HCT116 (cell line): ENCODE measurements at regions of chr15 and their contacts with region 1.

Region 1: DNA sequence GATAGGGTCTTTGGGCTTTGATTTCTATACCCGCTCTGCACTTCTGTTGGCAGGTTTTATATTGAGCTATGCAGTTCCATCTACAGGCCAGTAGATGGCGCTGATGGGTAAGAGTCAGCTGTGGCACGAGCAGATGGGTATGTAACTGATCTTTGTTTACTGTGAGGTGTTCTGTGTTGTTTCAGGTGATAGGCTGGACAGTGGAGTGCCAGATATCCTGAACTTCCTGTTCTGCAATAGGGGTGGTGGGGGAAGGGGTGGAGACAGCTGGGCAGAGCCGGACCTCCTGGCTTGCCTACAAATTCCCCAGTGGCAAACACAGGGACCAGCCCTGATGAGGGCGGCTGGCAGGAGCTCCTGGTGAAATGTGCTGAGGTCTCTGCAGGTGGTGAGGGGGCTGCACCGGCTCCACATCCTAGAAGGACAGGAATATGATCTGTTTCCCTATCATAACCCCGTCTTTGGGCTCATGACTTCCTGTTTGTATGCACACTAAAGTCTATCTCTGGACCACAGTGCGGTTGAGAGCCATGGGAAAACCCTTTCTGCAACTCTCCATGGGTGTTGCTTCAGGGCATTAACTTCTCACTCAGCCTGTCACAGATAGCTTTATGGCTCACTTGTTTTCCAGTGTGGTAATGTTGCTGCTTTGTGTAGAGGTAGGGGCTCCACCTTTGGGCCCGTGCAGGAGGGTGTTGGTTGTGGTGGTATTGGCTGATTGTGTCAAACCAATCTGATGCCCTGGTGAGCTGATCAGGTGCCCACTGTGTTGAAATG is 13.4 kb upstream of the FAM98B start:
- DNase-seq: peak; percentile 47
- ATAC-seq: peak; percentile 91
- H3K4me3 ChIP-seq: no peak overlapping the region
- H3K27ac ChIP-seq: no peak overlapping the region
- H3K4me1 ChIP-seq: peaks cover 0 to 5% of the 10 kb centered on the region in 2 experiments; a peak in 1 of 4 replicates
- H3K27me3 ChIP-seq: no peaks in the 10 kb centered on the region
- CTCF ChIP-seq: peak; percentile 48 to 97 (median 94); a peak in 5 of 6 replicates
- POLR2A ChIP-seq: no peak
- RAD21 ChIP-seq: peak; percentile 72

Region 2: DNA sequence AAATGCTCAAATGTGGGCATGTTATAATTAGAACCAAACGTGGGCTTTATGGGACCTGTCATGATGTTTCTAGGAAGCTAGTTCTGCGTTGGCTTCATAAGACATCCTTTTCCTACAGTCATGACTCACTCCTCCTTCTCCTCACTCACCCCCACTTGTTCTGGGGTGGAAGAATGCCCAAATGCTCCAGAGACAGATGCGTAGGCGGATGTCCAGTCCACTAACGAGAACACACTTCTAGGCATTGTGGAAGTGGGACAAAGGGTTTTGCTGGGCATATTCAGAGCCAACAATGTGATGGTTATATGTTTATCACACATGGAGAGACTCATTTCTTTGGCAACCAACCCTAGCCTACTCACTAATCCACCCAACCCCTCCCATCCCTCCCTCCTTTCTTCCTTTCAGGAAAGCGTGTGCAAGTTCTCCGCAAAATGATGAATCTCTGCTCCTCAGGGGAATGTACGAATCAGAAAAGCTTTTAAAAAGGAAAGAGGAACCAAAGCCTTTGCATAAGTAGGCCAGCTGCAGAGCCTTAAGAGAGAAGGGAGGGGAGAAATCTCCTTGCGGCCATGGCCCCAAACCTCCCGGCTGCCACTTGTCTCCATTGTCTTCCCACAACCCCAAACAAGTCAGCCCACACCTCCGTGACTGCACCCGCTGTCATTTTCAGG is 310.9 kb before region 1 on chr15:
- CTCF ChIA-PET with region 1: no interaction called
- POLR2A ChIA-PET with region 1: no interaction called
- RAD21 ChIA-PET with region 1: no interaction called
- intact Hi-C with region 1: no loop called
- DNase-seq: no peak
- ATAC-seq: no peak
- H3K4me3 ChIP-seq: no peak overlapping the region
- H3K27ac ChIP-seq: no peak overlapping the region
- H3K4me1 ChIP-seq: peaks cover 13 to 14% of the 10 kb centered on the region in 2 experiments
- H3K27me3 ChIP-seq: no peaks in the 10 kb centered on the region
- CTCF ChIP-seq: no peak
- POLR2A ChIP-seq: no peak
- RAD21 ChIP-seq: no peak

Region 3: DNA sequence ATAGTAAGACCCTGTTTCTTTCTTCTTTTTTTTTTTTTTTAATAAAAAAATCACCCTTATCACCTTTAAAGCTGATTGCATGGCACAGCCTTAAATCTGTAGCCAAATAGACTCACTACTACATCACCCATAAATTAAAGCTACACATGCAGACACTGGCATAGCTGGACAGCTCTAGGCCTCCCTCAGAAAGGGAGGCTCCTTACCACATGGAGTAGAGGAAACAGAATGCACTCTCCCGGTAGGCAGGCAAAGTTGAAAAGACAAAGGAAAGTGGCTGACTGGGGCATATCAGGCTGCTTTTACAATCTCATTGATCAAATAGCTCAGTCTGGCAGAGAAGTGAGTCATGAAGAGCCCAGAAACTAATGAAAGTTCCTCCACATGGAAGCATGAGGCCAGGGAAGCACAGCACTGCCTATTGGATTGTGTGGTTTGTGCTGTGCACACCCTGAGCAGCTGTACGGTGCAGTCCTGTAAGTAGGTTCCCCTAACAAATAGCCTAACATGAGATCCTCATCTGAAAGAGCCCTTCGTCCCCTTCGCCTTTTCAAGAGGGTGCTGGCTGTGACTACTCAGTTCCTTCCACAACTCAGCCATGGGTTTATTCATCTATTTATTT is 19.4 kb before region 1 on chr15:
- CTCF ChIA-PET with region 1: interaction called, 14 read pairs
- POLR2A ChIA-PET with region 1: no interaction called
- RAD21 ChIA-PET with region 1: no interaction called
- intact Hi-C with region 1: no loop called
- DNase-seq: no peak
- ATAC-seq: no peak
- H3K4me3 ChIP-seq: no peak overlapping the region
- H3K27ac ChIP-seq: no peak overlapping the region
- H3K4me1 ChIP-seq: no peaks in the 10 kb centered on the region
- H3K27me3 ChIP-seq: peaks cover 13% of the 10 kb centered on the region; the same call in 1 of the 2 replicates
- CTCF ChIP-seq: no peak
- POLR2A ChIP-seq: no peak
- RAD21 ChIP-seq: no peak

Region 4: GRCh38 chr15:38427380-38427779 is 13.2 kb before region 1 on chr15:
- CTCF ChIA-PET with region 1: interaction called, 10 read pairs
- POLR2A ChIA-PET with region 1: no interaction called
- RAD21 ChIA-PET with region 1: interaction called in 1 of 2 experiments, 3 read pairs
- intact Hi-C with region 1: no loop called
- DNase-seq: no peak
- ATAC-seq: 0 out of 2 replicates have a peak, but pooled peaks have one; percentile 57
- H3K4me3 ChIP-seq: no peak overlapping the region
- H3K27ac ChIP-seq: no peak overlapping the region
- H3K4me1 ChIP-seq: no peaks in the 10 kb centered on the region
- H3K27me3 ChIP-seq: no peaks in the 10 kb centered on the region
- CTCF ChIP-seq: 0 out of 6 replicates have a peak, but pooled peaks of 2 of the 3 experiments have one; percentile 8 to 12
- POLR2A ChIP-seq: no peak
- RAD21 ChIP-seq: no peak

Region 5: DNA sequence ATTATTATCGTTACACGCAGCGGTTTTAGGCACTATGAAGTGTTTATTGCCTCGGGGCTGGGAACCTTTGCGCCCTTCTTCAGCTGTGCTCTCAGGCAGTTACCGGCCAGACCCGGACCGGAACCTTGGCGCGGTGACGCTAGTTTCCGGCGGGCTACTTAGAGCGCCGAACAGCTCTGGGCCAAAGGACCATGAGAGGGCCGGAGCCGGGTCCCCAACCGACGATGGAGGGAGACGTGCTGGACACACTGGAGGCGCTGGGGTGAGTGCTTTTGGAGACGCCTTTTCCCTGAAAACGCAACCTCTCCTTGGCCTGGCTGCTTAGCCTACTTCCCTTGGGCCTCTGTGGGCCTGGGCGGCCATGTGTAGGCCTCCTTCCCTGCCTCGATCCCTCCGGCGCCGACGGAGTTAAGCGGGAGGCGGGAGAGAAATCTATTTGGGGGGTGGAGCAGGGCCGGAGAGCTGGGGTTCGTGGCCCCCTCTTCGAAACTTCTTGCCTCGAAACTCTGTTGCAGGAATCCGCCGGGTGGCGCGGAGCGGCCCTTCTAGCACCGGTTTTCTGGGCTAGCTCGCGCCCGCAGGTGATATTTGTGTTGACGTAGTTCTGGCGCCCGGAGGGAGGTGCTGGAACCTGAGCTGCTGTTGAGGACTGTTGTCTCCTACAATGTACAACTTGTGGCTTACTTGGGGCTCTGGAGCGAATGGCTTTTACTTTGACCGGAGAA is 13.6 kb after region 1 on chr15 and contains the start of gene FAM98B:
- CTCF ChIA-PET with region 1: interaction called, 20 read pairs
- POLR2A ChIA-PET with region 1: interaction called, 5 read pairs
- RAD21 ChIA-PET with region 1: interaction called in 1 of 2 experiments, 4 read pairs
- intact Hi-C with region 1: no loop called
- DNase-seq: peak; percentile 75
- ATAC-seq: peak; percentile 97
- H3K4me3 ChIP-seq: peak within 1 kb of the TSS; percentile 79 to 80
- H3K27ac ChIP-seq: peak within 1 kb of the TSS; percentile 86
- H3K4me1 ChIP-seq: peaks cover 9 to 12% of the 10 kb centered on the region in 2 experiments; a peak in 3 of 4 replicates
- H3K27me3 ChIP-seq: no peaks in the 10 kb centered on the region
- CTCF ChIP-seq: no peak
- POLR2A ChIP-seq: peak; percentile 39
- RAD21 ChIP-seq: no peak
- total RNA-seq, gene FAM98B: 44.3 TPM

Region 6: DNA sequence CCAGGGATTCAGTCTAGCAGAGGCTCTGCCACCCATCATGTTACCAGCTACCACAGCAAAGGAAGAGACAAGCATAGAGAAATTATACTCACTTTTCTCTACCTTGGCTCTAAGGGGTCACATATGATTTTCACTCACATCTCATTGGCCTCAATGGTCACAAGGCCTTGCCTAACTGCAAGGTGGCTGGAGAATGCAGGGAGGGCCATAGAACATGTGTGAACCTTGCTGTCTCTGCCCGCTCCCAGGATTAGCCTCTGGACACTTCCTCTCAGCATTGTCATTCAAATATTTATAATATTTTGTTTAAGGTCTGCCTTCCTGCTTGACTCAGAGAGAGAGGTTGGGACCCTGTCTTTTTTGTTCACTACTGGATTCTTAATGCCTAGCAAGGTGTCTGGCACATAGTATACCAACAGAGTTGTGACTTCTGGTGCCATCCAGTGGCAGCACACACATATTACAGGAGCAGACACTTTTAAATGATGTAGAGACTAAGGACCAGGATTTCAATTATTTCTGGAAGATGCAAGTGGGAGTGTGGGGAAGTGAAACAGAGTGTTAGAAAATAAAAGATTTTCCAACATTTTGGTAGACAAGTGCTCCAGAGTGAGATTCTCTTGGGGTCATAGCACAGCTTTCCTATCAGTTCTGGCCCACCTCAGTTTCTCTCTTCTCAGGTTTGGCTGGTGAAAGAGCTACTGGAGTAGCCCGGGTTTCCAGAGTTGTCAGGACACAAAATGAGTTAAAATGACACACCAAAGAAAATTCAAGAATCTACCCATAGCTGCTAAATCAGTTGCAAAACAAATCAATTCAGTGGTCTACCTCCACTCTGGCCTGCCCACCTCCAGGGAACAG is 243.1 kb after region 1 on chr15:
- CTCF ChIA-PET with region 1: interaction called, 34 read pairs
- POLR2A ChIA-PET with region 1: no interaction called
- RAD21 ChIA-PET with region 1: interaction called, 5 to 8 read pairs
- intact Hi-C with region 1: loop called (anchors 1 kb)
- DNase-seq: peak; percentile 27
- ATAC-seq: peak; percentile 95
- H3K4me3 ChIP-seq: no peak overlapping the region
- H3K27ac ChIP-seq: no peak overlapping the region
- H3K4me1 ChIP-seq: peaks cover 0 to 3% of the 10 kb centered on the region in 2 experiments; a peak in 1 of 4 replicates
- H3K27me3 ChIP-seq: no peaks in the 10 kb centered on the region
- CTCF ChIP-seq: peak; percentile 53 to 77 (median 69); a peak in 5 of 6 replicates
- POLR2A ChIP-seq: no peak
- RAD21 ChIP-seq: peak; percentile 68

Region 7: GRCh38 chr15:38690689-38691332 is 250.3 kb after region 1 on chr15:
- CTCF ChIA-PET with region 1: interaction called, 34 read pairs
- POLR2A ChIA-PET with region 1: interaction called, 3 read pairs
- RAD21 ChIA-PET with region 1: no interaction called
- intact Hi-C with region 1: no loop called
- DNase-seq: peak; percentile 61
- ATAC-seq: peak; percentile 82
- H3K4me3 ChIP-seq: no peak overlapping the region
- H3K27ac ChIP-seq: no peak overlapping the region
- H3K4me1 ChIP-seq: peaks cover 0 to 10% of the 10 kb centered on the region in 2 experiments; a peak in 1 of 4 replicates
- H3K27me3 ChIP-seq: no peaks in the 10 kb centered on the region
- CTCF ChIP-seq: peak; percentile 27 to 88 (median 82); a peak in 5 of 6 replicates
- POLR2A ChIP-seq: no peak
- RAD21 ChIP-seq: peak; percentile 43

Region 8: GRCh38 chr15:38699633-38700230 is 259.2 kb after region 1 on chr15:
- CTCF ChIA-PET with region 1: interaction called, 55 read pairs
- POLR2A ChIA-PET with region 1: no interaction called
- RAD21 ChIA-PET with region 1: interaction called, 4 to 6 read pairs
- intact Hi-C with region 1: no loop called
- DNase-seq: peak; percentile 54
- ATAC-seq: peak; percentile 89
- H3K4me3 ChIP-seq: no peak overlapping the region
- H3K27ac ChIP-seq: no peak overlapping the region
- H3K4me1 ChIP-seq: peaks cover 3 to 10% of the 10 kb centered on the region in 2 experiments; a peak in 1 of 4 replicates
- H3K27me3 ChIP-seq: no peaks in the 10 kb centered on the region
- CTCF ChIP-seq: peak; percentile 37 to 93 (median 92); a peak in 5 of 6 replicates
- POLR2A ChIP-seq: no peak
- RAD21 ChIP-seq: peak; percentile 51